Activated T-helper 1 cell treated with anti-CD3 and anti-CD28 coated beads, Interleukin-12 subunit alpha, Interleukin-12 subunit beta, Interleukin-2, Interleukin-4 antibody, amounts not matched to agents 30 ng/mL and 10 ng/mL and 1 ng/mL, durations not matched to agents 14 hours and 24 hours and 36 hours (primary cell): ENCODE measurements at regions of chr13 and their contacts with region 1.

Region 1: GRCh38 chr13:24127038-24127643 is 33.4 kb upstream of the SPATA13 start:
- DNase-seq: peak; percentile 5
- H3K4me3 Mint-ChIP-seq: no peak overlapping the region
- H3K27ac Mint-ChIP-seq: peak overlapping the region; percentile 36
- H3K4me1 Mint-ChIP-seq: peaks cover 49% of the 10 kb centered on the region
- H3K27me3 Mint-ChIP-seq: peaks cover 8% of the 10 kb centered on the region

Region 2: GRCh38 chr13:24053519-24054251 is 73.5 kb before region 1 on chr13:
- intact Hi-C with region 1: loop called (anchors 1 kb)
- DNase-seq: peak; percentile 55
- H3K4me3 Mint-ChIP-seq: no peak overlapping the region
- H3K27ac Mint-ChIP-seq: no peak overlapping the region
- H3K4me1 Mint-ChIP-seq: peaks cover 20% of the 10 kb centered on the region
- H3K27me3 Mint-ChIP-seq: peaks cover 15% of the 10 kb centered on the region

Region 3: DNA sequence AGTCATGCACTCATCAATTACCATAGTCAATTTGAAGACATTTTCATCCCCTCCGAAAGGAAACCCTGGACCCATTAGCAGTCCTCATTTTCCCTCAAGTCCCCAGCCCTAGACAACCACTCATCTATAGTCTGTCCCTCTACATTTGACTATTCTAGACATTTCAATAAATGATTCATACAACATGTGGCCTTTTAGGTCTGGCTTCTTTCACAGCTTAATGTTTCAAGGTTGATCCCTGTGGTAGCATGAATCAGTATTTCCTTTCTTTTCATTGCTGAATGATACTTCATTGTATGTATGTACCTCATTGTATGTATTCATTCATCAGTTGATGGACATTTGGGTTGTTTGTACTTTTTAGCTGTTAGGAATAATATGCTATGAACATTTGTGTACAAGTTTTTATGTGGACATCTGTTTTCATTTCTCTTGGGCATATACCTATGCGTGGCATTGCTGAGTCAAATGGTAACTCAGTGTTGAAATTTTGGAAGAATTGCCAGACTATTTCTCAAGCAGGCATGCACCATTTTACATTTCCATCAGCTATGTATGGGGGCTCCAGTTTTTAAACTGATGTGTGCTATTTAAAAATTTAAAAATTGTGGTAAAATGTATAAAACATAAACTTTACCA is 51.8 kb after region 1 on chr13:
- intact Hi-C with region 1: loop called (anchors 5 kb)
- DNase-seq: no peak
- H3K4me3 Mint-ChIP-seq: no peak overlapping the region
- H3K27ac Mint-ChIP-seq: peak overlapping the region; percentile 75
- H3K4me1 Mint-ChIP-seq: peaks cover 39% of the 10 kb centered on the region
- H3K27me3 Mint-ChIP-seq: no peaks in the 10 kb centered on the region

Region 4: GRCh38 chr13:24187185-24187584 is 60.0 kb after region 1 on chr13:
- intact Hi-C with region 1: loop called (anchors 2 kb)
- DNase-seq: peak; percentile 3
- H3K4me3 Mint-ChIP-seq: peak overlapping the region; percentile 42
- H3K27ac Mint-ChIP-seq: peak overlapping the region; percentile 86
- H3K4me1 Mint-ChIP-seq: peaks cover 63% of the 10 kb centered on the region
- H3K27me3 Mint-ChIP-seq: no peaks in the 10 kb centered on the region

Region 5: GRCh38 chr13:24220086-24220703 is 93.1 kb after region 1 on chr13:
- intact Hi-C with region 1: no loop called
- DNase-seq: peak; percentile 55
- H3K4me3 Mint-ChIP-seq: no peak overlapping the region
- H3K27ac Mint-ChIP-seq: no peak overlapping the region
- H3K4me1 Mint-ChIP-seq: peaks cover 64% of the 10 kb centered on the region
- H3K27me3 Mint-ChIP-seq: no peaks in the 10 kb centered on the region